ENCODE measurements at regions of chrX and their contacts with region 1.

Region 1: DNA sequence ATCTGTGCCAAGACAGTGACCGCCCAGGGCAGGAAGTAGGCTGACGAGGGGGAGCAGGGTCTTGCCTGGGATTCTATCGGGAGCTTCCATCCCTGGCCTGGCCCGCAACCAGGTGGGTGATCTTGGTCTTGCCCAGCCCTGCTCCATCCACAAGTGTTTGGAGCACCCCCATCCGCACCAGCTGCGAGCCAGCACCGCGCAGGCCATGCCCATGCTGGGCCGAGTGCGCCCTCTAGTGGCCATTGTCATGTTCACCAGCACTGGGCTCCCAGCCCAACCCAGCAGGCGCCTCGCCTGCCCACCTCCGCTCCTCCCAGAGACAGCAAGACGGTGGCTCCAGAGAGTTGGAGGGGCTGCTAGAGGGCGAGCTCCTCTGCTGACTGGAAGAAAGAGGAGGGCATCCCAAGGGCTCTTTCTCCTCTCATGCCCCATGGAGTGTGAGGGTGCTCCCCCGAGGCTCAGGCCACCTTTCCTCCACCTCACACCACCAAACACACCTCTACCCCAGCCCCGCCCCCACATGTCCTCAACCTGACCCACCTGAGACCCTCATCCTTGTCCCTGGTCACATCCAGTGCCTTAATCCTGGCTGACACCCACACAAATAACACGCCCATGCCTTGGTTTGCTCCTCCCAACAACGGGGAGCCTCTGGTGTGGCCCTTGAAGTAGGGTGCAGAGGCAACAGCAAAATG is 9.8 kb upstream of the ATP2B3 start:
- DNase-seq: peak; percentile 38 to 83
- H3K4me3 ChIP-seq: no peak overlapping the region
- H3K27ac ChIP-seq: no peak overlapping the region
- H3K4me1 ChIP-seq: no peaks in the 10 kb centered on the region
- H3K27me3 ChIP-seq: peaks cover 10% of the 10 kb centered on the region; the same call in 1 of the 2 replicates
- CTCF ChIP-seq: peak; percentile 87

Region 2: DNA sequence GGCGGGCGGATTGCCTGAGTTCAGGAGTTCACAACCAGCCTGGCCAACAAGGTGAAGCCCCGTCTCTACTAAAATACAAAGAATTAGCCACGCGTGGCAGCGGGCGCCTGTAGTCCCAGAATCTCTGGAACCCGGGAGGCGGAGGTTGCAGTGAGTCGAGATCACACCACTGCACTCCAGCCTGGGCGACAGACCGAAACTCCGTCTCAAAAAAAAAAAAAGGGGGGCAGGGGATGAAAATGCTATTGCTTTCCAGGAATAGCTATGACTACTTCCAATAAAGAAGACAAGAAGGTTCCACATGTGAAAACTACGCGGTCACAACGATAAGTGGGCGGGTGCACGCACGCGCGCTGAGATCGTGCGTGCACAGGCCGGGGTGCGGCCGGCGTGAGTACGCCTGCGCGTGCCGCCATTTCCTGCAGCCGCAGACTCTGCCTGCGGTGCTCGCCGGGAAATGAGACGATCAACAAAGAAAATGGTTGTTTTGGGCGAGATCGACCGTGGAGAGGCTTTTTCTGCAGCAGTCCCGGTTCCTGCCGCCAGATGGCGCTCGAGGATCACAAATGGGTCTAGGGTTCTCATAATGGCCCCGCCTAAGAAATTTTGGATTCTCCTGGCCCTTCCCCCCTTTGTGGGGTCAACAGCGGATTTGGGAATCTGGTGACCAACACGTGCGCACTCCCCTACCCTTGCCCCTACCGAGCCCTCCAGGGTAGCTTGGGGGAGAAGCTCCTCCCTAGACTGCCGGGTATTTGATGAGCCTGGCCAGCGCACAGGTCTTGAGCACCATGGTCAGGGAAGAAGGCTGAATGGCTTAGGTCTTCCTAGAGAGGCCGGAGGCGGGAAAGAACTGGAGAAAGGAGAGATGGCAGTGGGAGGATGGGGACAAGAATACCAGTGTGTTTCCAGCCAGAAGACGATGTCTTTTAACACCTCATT is 548.8 kb before region 1 on chrX:
- CTCF ChIA-PET with region 1: no interaction called
- POLR2A ChIA-PET with region 1: no interaction called
- intact Hi-C with region 1: loop called (anchors 1 kb)
- DNase-seq: peak; percentile 69 to 83
- H3K4me3 ChIP-seq: peak overlapping the region; percentile 13; the same call in 1 of the 2 replicates
- H3K27ac ChIP-seq: no peak overlapping the region
- H3K4me1 ChIP-seq: peaks cover 9% of the 10 kb centered on the region; the same call in 1 of the 2 replicates
- H3K27me3 ChIP-seq: no peaks in the 10 kb centered on the region
- CTCF ChIP-seq: peak; percentile 98

Region 3: GRCh38 chrX:153032397-153033118 is 475.1 kb before region 1 on chrX:
- CTCF ChIA-PET with region 1: no interaction called
- POLR2A ChIA-PET with region 1: no interaction called
- intact Hi-C with region 1: loop called (anchors 1 kb)
- DNase-seq: peak in 1 of 2 experiments; percentile 64
- H3K4me3 ChIP-seq: no peak overlapping the region
- H3K27ac ChIP-seq: no peak overlapping the region
- H3K4me1 ChIP-seq: no peaks in the 10 kb centered on the region
- H3K27me3 ChIP-seq: peaks cover 55% of the 10 kb centered on the region
- CTCF ChIP-seq: peak; percentile 93

Region 4: DNA sequence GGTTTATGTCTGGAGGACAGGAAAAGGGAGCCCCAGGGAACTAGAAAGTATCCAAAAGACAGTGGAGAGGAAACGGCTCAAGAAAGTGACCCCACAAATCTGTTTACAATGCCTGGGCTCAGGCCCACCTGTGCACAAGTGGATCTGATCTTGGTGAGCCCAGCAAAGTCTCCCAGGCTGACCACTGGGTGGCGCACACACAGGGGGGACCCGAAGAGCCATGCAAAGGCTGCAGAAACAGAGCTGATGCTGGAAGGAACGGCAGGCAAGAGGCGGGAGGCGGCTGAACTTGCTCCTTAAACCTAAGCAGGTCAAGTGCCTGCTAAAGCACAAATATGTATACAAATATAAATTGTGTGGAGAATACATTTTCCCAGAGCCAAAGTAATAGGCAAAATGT is 46.8 kb before region 1 on chrX:
- CTCF ChIA-PET with region 1: interaction called, 8 read pairs
- POLR2A ChIA-PET with region 1: no interaction called
- intact Hi-C with region 1: loop called (anchors 2 kb)
- DNase-seq: peak in 1 of 2 experiments; percentile 47
- H3K4me3 ChIP-seq: no peak overlapping the region
- H3K27ac ChIP-seq: no peak overlapping the region
- H3K4me1 ChIP-seq: no peaks in the 10 kb centered on the region
- H3K27me3 ChIP-seq: no peaks in the 10 kb centered on the region
- CTCF ChIP-seq: peak; percentile 73

Region 5: GRCh38 chrX:153470435-153471363 is 36.9 kb before region 1 on chrX and contains the start of gene HAUS7:
- CTCF ChIA-PET with region 1: interaction called, 3 read pairs
- POLR2A ChIA-PET with region 1: no interaction called
- intact Hi-C with region 1: loop called (anchors 2 kb)
- DNase-seq: peak; percentile 73 to 88
- H3K4me3 ChIP-seq: peak within 1 kb of the TSS; percentile 84
- H3K27ac ChIP-seq: no peak within 1 kb of the TSS
- H3K4me1 ChIP-seq: no peaks in the 10 kb centered on the region
- H3K27me3 ChIP-seq: no peaks in the 10 kb centered on the region
- CTCF ChIP-seq: peak; percentile 73
- total RNA-seq, gene HAUS7: 29.3 and 33.4 TPM in 2 replicates